ENCODE measurements at regions of chr3 and their contacts with region 1.

Region 1: GRCh38 chr3:186361762-186362536 is at the start of gene DGKG:
- DNase-seq: peak; percentile 68 to 81 (median 76)
- ATAC-seq: peak; percentile 63 to 85 (median 82)
- H3K4me3 ChIP-seq: peak within 1 kb of the TSS; percentile 51 to 89 (median 67)
- H3K27ac ChIP-seq: peak within 1 kb of the TSS; percentile 19 to 94 (median 78)
- H3K4me1 ChIP-seq: peaks cover 0 to 36% (median 25%) of the 10 kb centered on the region in 12 donors
- H3K27me3 ChIP-seq: peaks cover 0 to 40% (median 4%) of the 10 kb centered on the region in 9 donors
- CTCF ChIP-seq: no peak
- POLR2A ChIP-seq: peak; percentile 47 to 73
- total RNA-seq, gene DGKG: 21.6 to 59.3 (median 35.9) TPM

Region 2: DNA sequence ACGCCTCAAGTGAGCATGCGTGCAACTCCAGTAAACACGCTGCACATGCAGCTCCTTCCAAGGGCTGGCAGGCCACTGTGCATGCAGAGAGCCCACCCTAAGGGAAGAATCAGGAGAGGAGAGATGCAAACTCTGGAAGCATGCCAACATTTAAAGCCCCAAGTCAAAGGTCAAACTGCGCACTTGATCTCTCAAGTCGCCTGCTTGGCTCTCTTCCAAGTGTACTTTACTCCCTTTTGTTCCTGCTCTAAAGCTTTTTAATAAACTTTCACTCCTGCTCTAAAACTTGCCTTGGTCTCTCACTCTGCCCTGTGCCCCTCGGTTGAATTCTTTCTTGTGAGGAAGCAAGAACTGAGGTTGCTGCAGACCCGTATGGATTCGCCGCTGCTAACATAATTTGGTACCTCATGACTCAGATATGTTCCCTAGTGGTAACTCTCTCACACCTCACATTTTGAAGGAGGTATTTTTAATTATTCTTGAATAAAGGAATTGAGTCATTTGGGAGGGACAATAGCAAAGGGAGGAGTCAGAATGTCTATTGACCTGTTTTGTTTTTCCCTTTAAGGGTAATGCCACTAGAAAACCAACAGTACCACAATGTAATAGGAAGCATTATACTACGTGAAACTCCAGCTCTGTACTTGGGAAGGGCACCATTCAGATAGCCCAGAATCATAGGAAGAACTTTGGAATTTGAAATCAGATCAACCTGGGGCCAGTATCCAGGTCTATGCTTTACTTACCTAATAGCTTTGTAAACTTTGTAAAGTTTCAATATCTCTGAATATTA is 19.7 kb after region 1 on chr3:
- intact Hi-C with region 1: loop called in 1 of 10 experiments (anchors 2 kb)
- DNase-seq: no peak
- ATAC-seq: no peak
- H3K4me3 ChIP-seq: no peak overlapping the region
- H3K27ac ChIP-seq: peak overlapping the region in 9 of 12 donors; percentile 78 to 98 (median 92)
- H3K4me1 ChIP-seq: peaks cover 0 to 36% (median 16%) of the 10 kb centered on the region in 12 donors
- H3K27me3 ChIP-seq: no peaks in the 10 kb centered on the region
- CTCF ChIP-seq: no peak
- POLR2A ChIP-seq: no peak

Region 3: GRCh38 chr3:186406669-186407635 is 45.0 kb after region 1 on chr3:
- intact Hi-C with region 1: loop called in 4 of 10 experiments (anchors 1 to 10 kb)
- DNase-seq: peak; percentile 68 to 88 (median 87)
- ATAC-seq: peak; percentile 92 to 98 (median 97)
- H3K4me3 ChIP-seq: no peak overlapping the region
- H3K27ac ChIP-seq: peak overlapping the region; percentile 74 to 95 (median 89)
- H3K4me1 ChIP-seq: peaks cover 0 to 25% (median 13%) of the 10 kb centered on the region in 12 donors
- H3K27me3 ChIP-seq: no peaks in the 10 kb centered on the region
- CTCF ChIP-seq: no peak
- POLR2A ChIP-seq: no peak

Region 4: GRCh38 chr3:186413615-186414415 is 51.9 kb after region 1 on chr3:
- intact Hi-C with region 1: loop called in 4 of 10 experiments (anchors 2 to 10 kb)
- DNase-seq: peak in 3 of 5 donors; percentile 29 to 64 (median 62)
- ATAC-seq: peak; percentile 71 to 86 (median 82)
- H3K4me3 ChIP-seq: peak overlapping the region; percentile 1 to 48 (median 41)
- H3K27ac ChIP-seq: peak overlapping the region; percentile 60 to 83 (median 76)
- H3K4me1 ChIP-seq: peaks cover 0 to 19% (median 10%) of the 10 kb centered on the region in 12 donors
- H3K27me3 ChIP-seq: no peaks in the 10 kb centered on the region
- CTCF ChIP-seq: no peak
- POLR2A ChIP-seq: no peak

Region 5: DNA sequence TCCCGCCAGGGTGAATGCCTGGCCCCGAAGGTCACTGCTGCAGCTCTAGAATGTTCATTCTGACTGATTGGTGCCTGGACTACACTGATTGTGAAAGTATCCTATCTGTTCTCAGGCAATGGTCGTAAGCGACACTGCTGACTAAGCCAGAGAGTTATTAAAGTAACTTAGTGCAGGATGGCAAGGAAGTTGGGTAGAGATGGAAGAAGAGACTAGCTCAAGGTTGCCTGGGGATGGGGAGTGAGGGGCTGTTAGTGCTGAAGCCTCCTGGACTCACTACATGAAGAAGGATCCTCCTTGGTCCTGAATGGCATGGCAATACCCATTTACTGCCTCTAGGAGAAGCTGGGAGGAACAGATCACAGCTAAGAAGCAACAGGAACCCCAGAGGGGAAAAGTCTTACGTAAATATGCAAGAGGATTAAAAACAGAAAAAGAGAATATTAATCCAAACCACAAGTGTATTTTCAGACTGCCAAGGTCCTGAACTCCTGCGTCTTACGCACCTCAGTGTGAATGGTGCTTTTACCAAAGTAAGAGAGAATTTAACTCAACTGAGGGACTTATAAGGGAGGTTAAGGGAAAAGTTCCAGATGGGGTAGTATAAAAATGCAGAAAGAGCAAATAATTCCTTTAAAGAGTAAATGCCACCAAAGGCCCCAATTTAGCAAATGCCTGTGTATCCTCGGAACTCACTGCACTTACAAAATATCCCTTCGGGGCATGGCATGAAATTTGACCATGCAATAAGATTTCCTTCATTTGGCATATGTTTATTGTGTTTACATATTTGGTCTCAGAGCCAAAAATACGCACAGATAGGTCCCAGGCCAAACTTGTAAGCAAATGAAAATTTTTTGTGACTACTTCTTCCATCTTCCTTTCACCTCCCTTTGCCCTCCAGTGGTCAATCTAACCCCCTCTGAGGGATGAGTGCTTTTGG is 64.1 kb after region 1 on chr3:
- intact Hi-C with region 1: loop called in 2 of 10 experiments (anchors 5 kb)
- DNase-seq: no peak
- ATAC-seq: peak in 3 of 4 donors; percentile 44 to 60 (median 55)
- H3K4me3 ChIP-seq: no peak overlapping the region
- H3K27ac ChIP-seq: peak overlapping the region in 6 of 12 donors; percentile 8 to 77 (median 49)
- H3K4me1 ChIP-seq: peaks cover 0 to 34% (median 13%) of the 10 kb centered on the region in 12 donors
- H3K27me3 ChIP-seq: peaks cover 0 to 4% (median 0%) of the 10 kb centered on the region in 9 donors
- CTCF ChIP-seq: peak in 5 of 12 donors; percentile 7 to 37 (median 30)
- POLR2A ChIP-seq: no peak

Region 6: GRCh38 chr3:186442162-186442561 is 80.2 kb after region 1 on chr3:
- intact Hi-C with region 1: loop called in 1 of 10 experiments (anchors 10 kb)
- DNase-seq: peak in 4 of 5 donors; percentile 66 to 79 (median 69)
- ATAC-seq: peak; percentile 92 to 96 (median 94)
- H3K4me3 ChIP-seq: no peak overlapping the region
- H3K27ac ChIP-seq: peak overlapping the region in 8 of 12 donors; percentile 4 to 89 (median 73)
- H3K4me1 ChIP-seq: peaks cover 0 to 17% (median 0%) of the 10 kb centered on the region in 12 donors
- H3K27me3 ChIP-seq: no peaks in the 10 kb centered on the region
- CTCF ChIP-seq: no peak
- POLR2A ChIP-seq: no peak

Region 7: GRCh38 chr3:186514296-186515002 is 152.5 kb after region 1 on chr3:
- intact Hi-C with region 1: no loop called
- DNase-seq: no peak
- ATAC-seq: no peak
- H3K4me3 ChIP-seq: no peak overlapping the region
- H3K27ac ChIP-seq: no peak overlapping the region
- H3K4me1 ChIP-seq: peaks cover 0 to 7% (median 0%) of the 10 kb centered on the region in 12 donors
- H3K27me3 ChIP-seq: peaks cover 0 to 16% (median 0%) of the 10 kb centered on the region in 9 donors
- CTCF ChIP-seq: peak in 7 of 12 donors; percentile 6 to 43 (median 23)
- POLR2A ChIP-seq: no peak

Region 8: GRCh38 chr3:186540221-186540834 is 178.4 kb after region 1 on chr3:
- intact Hi-C with region 1: no loop called
- DNase-seq: peak in 4 of 5 donors; percentile 36 to 64 (median 54)
- ATAC-seq: peak; percentile 53 to 82 (median 80)
- H3K4me3 ChIP-seq: peak overlapping the region in 5 of 12 donors; percentile 11 to 42 (median 26)
- H3K27ac ChIP-seq: no peak overlapping the region
- H3K4me1 ChIP-seq: peaks cover 0 to 23% (median 14%) of the 10 kb centered on the region in 12 donors
- H3K27me3 ChIP-seq: no peaks in the 10 kb centered on the region
- CTCF ChIP-seq: peak; percentile 59 to 79 (median 70)
- POLR2A ChIP-seq: no peak

Measured in heart left ventricle (tissue), 16 donors.